Colonic mucosa (tissue), 4 donors: ENCODE measurements at regions of chr2 and their contacts with region 1.

Region 1: DNA sequence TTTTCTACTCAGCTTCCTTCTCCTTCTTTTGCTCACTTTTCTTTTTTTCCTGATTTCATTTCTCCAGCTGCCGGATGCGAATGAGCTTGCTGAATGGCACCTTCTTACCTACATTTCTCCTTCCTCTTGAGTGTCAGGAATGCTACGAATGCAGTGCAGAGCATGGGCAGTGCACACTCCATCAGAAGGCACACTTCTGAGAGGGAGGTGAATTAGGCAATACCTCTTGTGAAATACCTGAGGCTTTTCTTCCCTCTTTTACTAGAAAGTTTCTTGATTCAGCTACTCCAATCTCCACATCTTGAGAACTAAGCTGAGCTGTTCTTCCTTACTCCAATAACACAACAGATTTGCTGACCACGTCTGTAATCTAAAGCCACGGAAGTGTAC is 51.1 kb downstream of the PLEKHM3 start:
- DNase-seq: no peak
- H3K4me3 ChIP-seq: no peak overlapping the region
- H3K27ac ChIP-seq: no peak overlapping the region
- H3K4me1 ChIP-seq: peaks cover 16% of the 10 kb centered on the region
- H3K27me3 ChIP-seq: no peaks in the 10 kb centered on the region
- CTCF ChIP-seq: no peak

Region 2: DNA sequence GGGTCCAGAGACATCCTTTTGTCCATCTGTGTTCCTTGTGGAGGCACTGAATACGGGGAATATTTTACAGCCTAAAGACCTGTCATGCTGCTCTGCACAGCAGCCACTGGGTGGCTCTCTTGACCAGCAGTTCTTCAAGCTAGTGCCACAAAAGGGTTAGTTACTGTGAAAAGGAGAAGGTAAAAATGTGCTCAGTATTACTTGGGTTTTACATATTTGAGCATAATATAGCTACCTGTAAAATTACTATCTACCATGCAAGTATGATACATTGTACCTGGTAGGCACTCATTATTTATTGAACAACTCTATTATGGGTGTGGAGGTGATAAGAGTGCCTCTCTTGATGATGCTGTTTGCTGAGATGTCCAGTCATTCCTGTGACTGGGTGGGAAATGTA is 228.1 kb before region 1 on chr2:
- intact Hi-C with region 1: loop called (anchors 5 kb)
- DNase-seq: peak; percentile 50
- H3K4me3 ChIP-seq: no peak overlapping the region
- H3K27ac ChIP-seq: no peak overlapping the region
- H3K4me1 ChIP-seq: no peaks in the 10 kb centered on the region
- H3K27me3 ChIP-seq: no peaks in the 10 kb centered on the region
- CTCF ChIP-seq: peak; percentile 73

Region 3: GRCh38 chr2:207762146-207762545 is 212.1 kb before region 1 on chr2:
- intact Hi-C with region 1: loop called (anchors 5 kb)
- DNase-seq: no peak
- H3K4me3 ChIP-seq: no peak overlapping the region
- H3K27ac ChIP-seq: no peak overlapping the region
- H3K4me1 ChIP-seq: peaks cover 9% of the 10 kb centered on the region
- H3K27me3 ChIP-seq: no peaks in the 10 kb centered on the region
- CTCF ChIP-seq: no peak

Region 4: DNA sequence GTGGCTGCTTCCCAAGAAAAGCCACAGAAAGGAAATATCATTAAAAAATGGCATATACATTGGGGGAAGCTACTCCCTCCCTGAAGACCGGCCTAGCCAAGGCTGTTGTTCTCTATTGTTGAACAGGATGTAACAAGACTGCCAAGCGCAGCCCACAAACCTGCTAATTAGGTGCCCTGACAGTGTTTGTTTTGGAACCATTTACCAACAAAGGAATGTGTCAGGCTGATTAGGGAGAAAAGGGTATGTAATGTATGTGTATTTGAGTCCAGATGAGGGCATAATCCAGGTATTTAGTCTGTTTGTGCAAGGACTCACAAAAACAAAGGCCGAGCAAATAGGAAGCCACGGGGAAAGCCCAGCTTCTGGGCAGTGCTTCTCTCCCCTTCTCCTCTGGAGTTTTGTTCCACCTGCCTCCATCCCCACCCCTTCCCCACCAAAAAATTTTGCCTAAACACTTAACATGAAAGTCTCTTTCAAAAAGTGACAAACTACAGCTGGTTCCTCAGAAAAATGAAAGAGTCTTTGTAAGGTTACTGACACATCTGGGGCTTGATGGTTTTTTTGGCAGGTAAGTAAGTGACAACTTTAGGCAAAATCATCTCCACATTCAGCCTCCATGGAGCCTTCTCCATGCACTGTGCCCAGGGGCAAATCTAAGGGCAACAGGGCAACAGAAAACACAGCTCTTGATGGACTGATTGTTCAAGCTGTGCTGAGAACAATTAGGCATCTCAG is 126.2 kb before region 1 on chr2:
- intact Hi-C with region 1: no loop called
- DNase-seq: peak; percentile 83
- H3K4me3 ChIP-seq: no peak overlapping the region
- H3K27ac ChIP-seq: peak overlapping the region; percentile 82
- H3K4me1 ChIP-seq: peaks cover 6% of the 10 kb centered on the region
- H3K27me3 ChIP-seq: no peaks in the 10 kb centered on the region
- CTCF ChIP-seq: no peak